ENCODE measurements at regions of chr2 and their contacts with region 1.

Region 1: GRCh38 chr2:238060542-238061314 is at the start of gene SCLY:
- DNase-seq: peak; percentile 95 to 99
- H3K4me3 ChIP-seq: peak within 1 kb of the TSS; percentile 98
- H3K27ac ChIP-seq: peak within 1 kb of the TSS; percentile 67
- H3K4me1 ChIP-seq: peaks cover 17% of the 10 kb centered on the region
- H3K27me3 ChIP-seq: no peaks in the 10 kb centered on the region
- CTCF ChIP-seq: no peak; the same call in 1 of the 2 replicates
- total RNA-seq, gene SCLY: 33.9 and 40.0 TPM in 2 replicates

Region 2: DNA sequence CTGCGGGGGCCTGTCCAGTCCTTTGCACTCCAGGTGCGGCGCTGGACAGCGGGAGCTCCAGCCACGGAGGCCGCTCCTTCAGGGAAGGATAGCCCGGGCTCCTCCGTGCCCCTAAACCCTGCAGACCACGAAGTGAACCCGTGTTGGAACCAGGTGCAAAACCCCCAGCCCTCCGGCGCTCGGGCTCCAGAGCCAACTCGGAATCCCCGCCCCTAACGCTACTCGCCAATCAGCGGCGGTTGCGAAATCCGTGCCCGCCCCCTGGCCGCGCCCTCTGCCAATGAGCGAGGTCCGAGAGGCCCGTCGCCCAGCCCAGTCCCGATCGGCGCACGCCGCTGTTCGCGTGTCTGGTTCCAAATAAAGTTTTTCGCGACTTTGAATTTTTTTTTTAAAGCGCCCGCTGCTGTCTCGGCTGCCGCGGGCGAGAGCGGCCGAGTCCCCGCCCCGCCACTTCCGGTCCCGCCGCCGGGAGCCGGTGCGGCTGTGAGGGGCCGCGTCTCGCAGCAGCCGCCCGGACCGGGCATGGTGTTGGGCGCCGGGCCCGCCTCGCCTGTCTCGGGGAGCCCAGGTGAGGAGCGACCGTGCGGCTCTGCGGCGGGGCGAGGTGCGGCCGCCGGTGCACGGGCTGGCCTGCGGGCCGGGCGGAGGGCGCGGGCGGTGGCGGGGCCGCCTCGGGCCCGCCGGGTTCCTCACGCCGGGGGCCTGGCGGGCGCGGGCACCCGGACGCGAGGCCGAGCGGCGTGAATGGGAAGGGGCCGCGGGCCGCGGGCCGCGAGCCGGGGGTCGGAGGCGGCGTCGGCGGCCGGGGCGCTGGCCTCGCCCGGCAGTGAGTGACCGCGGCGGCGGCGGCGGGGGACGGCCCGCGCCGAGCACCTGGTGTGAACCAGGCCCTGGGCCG is 93.9 kb before region 1 on chr2 and contains the start of gene UBE2F:
- CTCF ChIA-PET with region 1: interaction called, 5 read pairs
- POLR2A ChIA-PET with region 1: no interaction called
- intact Hi-C with region 1: loop called (anchors 2 kb)
- DNase-seq: peak; percentile 92 to 100
- H3K4me3 ChIP-seq: peak within 1 kb of the TSS; percentile 96
- H3K27ac ChIP-seq: peak within 1 kb of the TSS; percentile 91
- H3K4me1 ChIP-seq: peaks cover 45% of the 10 kb centered on the region
- H3K27me3 ChIP-seq: no peaks in the 10 kb centered on the region
- CTCF ChIP-seq: no peak
- total RNA-seq, gene UBE2F: 76.7 and 103 TPM in 2 replicates

Region 3: DNA sequence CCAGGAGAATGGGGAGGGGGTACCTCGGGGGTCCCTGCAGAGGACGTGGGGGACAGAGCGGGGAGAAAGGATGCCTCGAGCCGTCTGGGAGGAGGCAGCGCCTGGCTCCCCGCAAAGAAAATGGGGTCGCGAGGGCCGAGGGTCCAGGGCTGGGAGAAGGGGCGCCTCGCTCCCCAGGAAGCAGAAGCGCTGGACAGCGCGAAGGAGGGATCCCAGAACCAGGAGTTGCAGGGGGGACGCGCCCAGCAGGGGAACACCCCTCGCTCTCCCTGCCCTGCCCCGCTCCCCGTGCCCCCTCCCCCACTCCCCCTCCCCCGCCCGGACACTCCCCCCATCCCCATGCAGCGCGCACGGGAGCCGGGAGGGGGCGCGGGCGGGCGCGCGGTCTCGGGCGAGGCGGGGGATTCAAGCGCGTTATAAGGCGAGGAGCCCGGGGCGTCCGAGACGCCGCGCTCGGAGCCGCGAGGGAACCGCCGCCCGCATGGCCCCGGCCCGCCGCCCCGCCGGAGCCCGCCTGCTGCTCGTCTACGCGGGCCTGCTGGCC is 97.9 kb after region 1 on chr2 and contains the start of gene ERFE:
- CTCF ChIA-PET with region 1: no interaction called
- POLR2A ChIA-PET with region 1: no interaction called
- intact Hi-C with region 1: no loop called
- DNase-seq: peak in 1 of 2 experiments; percentile 78
- H3K4me3 ChIP-seq: peak within 1 kb of the TSS; percentile 62
- H3K27ac ChIP-seq: no peak within 1 kb of the TSS
- H3K4me1 ChIP-seq: peaks cover 5% of the 10 kb centered on the region; the same call in 1 of the 2 replicates
- H3K27me3 ChIP-seq: no peaks in the 10 kb centered on the region
- CTCF ChIP-seq: 0 out of 2 replicates have a peak, but pooled peaks have one; percentile 11
- total RNA-seq, gene ERFE: 9.7 and 18.3 TPM in 2 replicates

Region 4: DNA sequence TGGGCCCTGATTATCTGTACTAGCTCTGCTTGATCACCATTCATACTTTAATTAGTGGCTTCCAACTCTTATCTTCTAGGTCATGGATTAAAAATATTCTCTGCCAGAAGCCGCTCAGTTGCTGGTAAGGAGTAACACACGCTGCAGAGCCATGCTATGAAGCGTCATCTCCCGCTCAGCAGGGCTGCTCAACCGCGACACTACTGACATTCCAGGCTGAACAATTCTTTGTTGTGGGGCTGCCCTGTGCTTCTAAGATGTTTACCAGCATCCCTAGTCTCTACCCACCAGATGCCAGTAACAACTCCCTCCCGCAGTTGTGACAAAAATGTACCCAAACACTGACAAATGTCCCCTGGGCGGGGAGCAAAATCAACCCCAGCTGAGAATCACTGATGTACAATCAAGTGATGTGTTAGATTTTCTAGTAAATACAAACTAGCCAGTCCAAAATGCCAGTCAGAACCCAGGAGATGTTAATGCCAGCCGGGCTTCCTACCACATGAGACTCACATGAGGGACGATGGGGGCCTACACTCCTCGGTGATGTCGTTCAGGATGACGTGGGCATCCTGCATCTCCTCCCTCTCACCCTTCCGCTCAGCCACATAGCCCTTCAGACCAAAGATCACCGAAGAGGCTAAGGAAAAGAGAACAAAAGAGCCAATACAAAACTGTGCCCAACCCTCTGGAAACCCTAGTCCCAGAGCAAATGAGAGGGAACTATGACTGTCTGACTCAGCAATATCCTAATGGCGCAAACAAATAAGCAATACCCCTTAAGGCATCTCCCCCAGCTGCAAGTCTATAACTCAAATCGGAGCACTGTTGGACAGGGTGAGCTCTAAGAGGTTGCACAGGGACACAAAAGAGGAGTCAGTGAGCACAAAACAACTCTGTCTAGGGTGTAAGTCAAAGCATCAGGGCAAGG is 127.2 kb after region 1 on chr2:
- CTCF ChIA-PET with region 1: no interaction called
- POLR2A ChIA-PET with region 1: interaction called, 5 read pairs
- intact Hi-C with region 1: loop called (anchors 10 kb)
- DNase-seq: no peak
- H3K4me3 ChIP-seq: no peak overlapping the region
- H3K27ac ChIP-seq: no peak overlapping the region
- H3K4me1 ChIP-seq: no peaks in the 10 kb centered on the region
- H3K27me3 ChIP-seq: no peaks in the 10 kb centered on the region
- CTCF ChIP-seq: no peak

Measured in PC-9 (cell line).